HepG2 (cell line): ENCODE measurements at regions of chr13 and their contacts with region 1.

Region 1: GRCh38 chr13:75760131-75761021 is 124.2 kb downstream of the LMO7 start:
- DNase-seq: peak; percentile 98
- ATAC-seq: peak; percentile 98
- H3K4me3 ChIP-seq: peak overlapping the region; percentile 72 to 98 (median 77)
- H3K27ac ChIP-seq: peak overlapping the region; percentile 95
- H3K4me1 ChIP-seq: peaks cover 41% of the 10 kb centered on the region
- H3K27me3 ChIP-seq: no peaks in the 10 kb centered on the region
- CTCF ChIP-seq: peak; percentile 21; the same call in 1 of the 2 replicates
- EP300 ChIP-seq: peak in 1 of 2 experiments; percentile 81; a peak in 3 of 4 replicates
- POLR2A ChIP-seq: peak; percentile 84 to 96
- RAD21 ChIP-seq: peak; percentile 34; the same call in 1 of the 2 replicates

Region 2: GRCh38 chr13:75694722-75695121 is 65.7 kb before region 1 on chr13:
- CTCF ChIA-PET with region 1: no interaction called
- POLR2A ChIA-PET with region 1: interaction called, 5 read pairs
- in situ Hi-C with region 1: no loop called
- intact Hi-C with region 1: loop called (anchors 5 kb)
- DNase-seq: no peak
- ATAC-seq: no peak
- H3K4me3 ChIP-seq: no peak overlapping the region
- H3K27ac ChIP-seq: no peak overlapping the region
- H3K4me1 ChIP-seq: no peaks in the 10 kb centered on the region
- H3K27me3 ChIP-seq: no peaks in the 10 kb centered on the region
- CTCF ChIP-seq: no peak
- EP300 ChIP-seq: no peak
- POLR2A ChIP-seq: no peak
- RAD21 ChIP-seq: no peak

Region 3: DNA sequence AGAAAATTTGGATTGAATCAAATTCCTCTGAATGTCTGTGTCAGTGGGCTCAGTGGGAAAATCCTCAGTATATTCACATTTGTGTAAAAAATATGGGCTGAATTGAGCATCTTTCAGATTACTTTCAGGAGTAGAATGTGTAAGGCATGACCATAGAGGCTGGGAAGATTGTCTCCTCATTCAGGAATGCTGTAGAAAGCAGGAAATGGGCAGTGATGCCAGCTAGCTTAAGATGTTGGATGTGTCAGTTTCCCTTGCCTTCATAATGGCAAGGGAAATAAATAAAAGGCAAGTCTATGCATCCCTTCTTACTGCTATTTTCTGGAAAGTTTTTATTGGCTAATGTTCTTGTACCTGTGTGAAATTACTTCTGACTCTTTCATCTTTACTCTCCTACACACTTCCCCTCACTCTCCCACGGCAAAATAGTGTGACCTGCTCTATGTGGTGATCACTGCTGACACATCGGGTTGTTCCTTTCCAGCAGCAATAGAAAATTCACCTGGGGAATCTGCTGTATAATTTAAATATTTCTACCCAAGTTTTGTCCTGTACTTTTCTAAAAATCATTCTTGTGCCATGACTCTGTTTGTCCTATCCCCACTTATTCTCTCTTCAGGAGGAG is 21.0 kb before region 1 on chr13:
- CTCF ChIA-PET with region 1: no interaction called
- POLR2A ChIA-PET with region 1: interaction called, 9 read pairs
- in situ Hi-C with region 1: no loop called
- intact Hi-C with region 1: loop called (anchors 2 kb)
- DNase-seq: no peak
- ATAC-seq: no peak
- H3K4me3 ChIP-seq: no peak overlapping the region
- H3K27ac ChIP-seq: no peak overlapping the region
- H3K4me1 ChIP-seq: peaks cover 15% of the 10 kb centered on the region
- H3K27me3 ChIP-seq: no peaks in the 10 kb centered on the region
- CTCF ChIP-seq: no peak
- EP300 ChIP-seq: no peak
- POLR2A ChIP-seq: no peak
- RAD21 ChIP-seq: no peak

Region 4: GRCh38 chr13:75770592-75771011 is 10.2 kb after region 1 on chr13:
- CTCF ChIA-PET with region 1: no interaction called
- POLR2A ChIA-PET with region 1: interaction called, 10 read pairs
- in situ Hi-C with region 1: no loop called
- intact Hi-C with region 1: loop called (anchors 1 kb)
- DNase-seq: no peak
- ATAC-seq: peak; percentile 35; the same call in 2 of the 3 replicates
- H3K4me3 ChIP-seq: no peak overlapping the region
- H3K27ac ChIP-seq: no peak overlapping the region
- H3K4me1 ChIP-seq: peaks cover 80% of the 10 kb centered on the region
- H3K27me3 ChIP-seq: no peaks in the 10 kb centered on the region
- CTCF ChIP-seq: no peak
- EP300 ChIP-seq: no peak
- POLR2A ChIP-seq: no peak
- RAD21 ChIP-seq: no peak

Region 5: DNA sequence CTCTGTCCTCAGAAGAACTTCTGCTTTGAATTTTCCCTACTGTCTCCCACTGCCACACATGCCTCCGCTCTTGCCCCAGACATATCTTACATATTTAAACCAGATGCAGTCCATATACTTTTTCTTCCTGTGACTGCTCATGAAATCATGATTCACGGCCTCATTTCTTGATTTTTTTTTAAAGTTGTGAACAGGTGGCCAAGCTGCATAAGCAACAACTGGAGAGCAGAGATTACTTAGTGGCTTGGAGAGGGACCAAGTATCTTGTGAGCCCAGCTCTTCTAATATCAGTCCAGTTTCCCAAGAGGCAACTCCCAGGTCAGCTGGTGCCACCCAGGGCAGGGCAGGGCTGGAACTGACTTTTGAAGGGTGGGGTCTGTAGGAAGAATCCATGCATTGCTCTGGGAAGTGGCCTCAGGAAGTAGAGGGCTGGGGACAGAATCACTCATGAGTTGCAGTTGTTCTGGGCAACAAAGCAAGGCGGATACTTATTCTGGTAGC is 28.2 kb after region 1 on chr13:
- CTCF ChIA-PET with region 1: no interaction called
- POLR2A ChIA-PET with region 1: interaction called, 78 read pairs
- in situ Hi-C with region 1: no loop called
- intact Hi-C with region 1: loop called (anchors 1 kb)
- DNase-seq: no peak
- ATAC-seq: no peak
- H3K4me3 ChIP-seq: no peak overlapping the region
- H3K27ac ChIP-seq: peak overlapping the region; percentile 14
- H3K4me1 ChIP-seq: peaks cover 75% of the 10 kb centered on the region
- H3K27me3 ChIP-seq: no peaks in the 10 kb centered on the region
- CTCF ChIP-seq: no peak
- EP300 ChIP-seq: no peak
- POLR2A ChIP-seq: no peak
- RAD21 ChIP-seq: no peak

Region 6: GRCh38 chr13:75798353-75799255 is 38.2 kb after region 1 on chr13:
- CTCF ChIA-PET with region 1: no interaction called
- POLR2A ChIA-PET with region 1: interaction called, 78 read pairs
- in situ Hi-C with region 1: loop called (anchors 5 kb)
- intact Hi-C with region 1: no loop called
- DNase-seq: no peak
- ATAC-seq: peak; percentile 49; the same call in 2 of the 3 replicates
- H3K4me3 ChIP-seq: no peak overlapping the region
- H3K27ac ChIP-seq: no peak overlapping the region
- H3K4me1 ChIP-seq: peaks cover 36% of the 10 kb centered on the region
- H3K27me3 ChIP-seq: no peaks in the 10 kb centered on the region
- CTCF ChIP-seq: no peak
- EP300 ChIP-seq: no peak
- POLR2A ChIP-seq: no peak
- RAD21 ChIP-seq: no peak